Right ventricle myocardium superior (tissue), 1 donor: ENCODE measurements at regions of chr17 and their contacts with region 1.

Region 1: DNA sequence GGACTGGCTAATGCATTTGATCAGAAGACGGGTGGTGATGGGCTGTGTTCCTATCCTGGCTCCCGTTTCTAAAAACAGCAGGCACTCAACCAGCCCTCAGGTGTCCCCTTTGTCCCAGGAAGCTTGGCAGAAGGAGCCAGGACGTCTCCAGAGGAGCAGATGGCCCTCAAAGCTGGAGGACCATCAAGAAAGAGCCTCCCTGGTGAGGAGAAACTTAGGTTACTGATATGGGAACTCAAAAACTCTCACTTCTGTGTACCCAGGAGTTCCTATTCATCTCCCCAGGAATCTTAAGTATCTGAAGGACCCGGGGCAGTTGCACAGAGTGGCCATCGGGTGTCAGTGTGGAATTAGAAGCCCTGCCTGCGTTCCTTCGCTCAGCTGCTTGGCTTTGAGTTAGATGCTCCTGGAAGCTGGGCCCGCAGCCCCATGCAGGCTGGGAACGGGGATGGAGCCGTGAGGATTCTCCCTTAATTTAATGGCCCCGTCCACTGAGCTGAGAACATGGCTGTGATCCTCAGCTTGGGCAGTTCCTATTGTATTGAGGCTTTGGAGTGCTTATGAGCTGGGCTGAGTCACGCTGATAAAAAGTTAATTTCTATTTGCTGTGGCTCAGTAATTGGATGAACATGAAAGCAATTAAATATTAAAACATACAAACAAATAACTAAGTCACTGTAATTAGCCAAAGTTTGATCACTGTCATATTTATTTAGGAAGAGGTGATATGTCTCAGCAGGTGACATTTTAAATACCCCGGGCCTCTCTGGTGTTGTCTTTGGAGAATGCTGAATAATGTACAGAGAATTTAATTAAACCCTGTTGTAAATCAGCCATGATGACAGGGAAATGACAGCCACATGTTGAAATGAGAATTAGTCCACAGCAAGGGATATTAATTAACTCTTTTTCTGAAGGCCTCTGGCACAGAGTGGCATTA is 402.1 kb downstream of the SEC14L1 start:
- DNase-seq: peak; percentile 86
- ATAC-seq: peak; percentile 96

Region 2: DNA sequence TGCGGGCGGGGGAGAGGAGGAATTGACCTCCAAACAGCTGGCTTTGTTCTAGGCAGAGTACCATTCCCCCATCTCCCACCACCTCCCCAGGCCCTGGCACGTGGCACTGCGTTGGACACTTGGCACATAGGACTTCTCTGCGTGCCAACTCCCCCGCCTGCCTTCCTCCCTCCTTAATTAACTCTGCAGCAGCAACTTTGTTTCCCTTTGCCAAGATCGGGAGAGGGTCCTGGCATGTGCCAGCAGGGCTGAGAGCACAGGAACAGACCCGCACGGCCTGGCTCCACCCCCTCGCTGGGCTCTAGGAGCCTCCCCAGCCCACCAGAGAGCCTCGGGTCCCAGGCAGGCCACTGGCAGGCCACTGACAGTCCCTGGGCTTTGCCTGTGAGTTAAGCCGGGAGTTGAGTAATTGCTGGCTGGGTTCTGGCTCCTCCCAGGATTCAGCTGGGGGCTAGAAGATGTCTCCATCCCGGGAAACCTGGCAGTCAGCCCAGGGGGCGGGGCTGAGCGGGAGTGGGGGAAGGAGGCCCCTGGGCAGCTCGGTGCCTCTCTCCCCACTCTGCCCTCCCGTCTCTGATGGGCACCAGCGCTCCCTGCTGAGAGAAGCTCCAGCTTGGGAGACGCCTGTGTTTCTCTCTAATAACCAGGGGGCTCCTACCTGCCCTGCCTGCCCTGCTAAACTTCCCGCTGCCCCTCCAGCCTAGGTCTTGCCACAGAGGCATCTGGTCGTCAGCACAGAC is 191.7 kb after region 1 on chr17:
- intact Hi-C with region 1: loop called (anchors 10 kb)
- DNase-seq: peak; percentile 95
- ATAC-seq: peak; percentile 85

Region 3: GRCh38 chr17:77755410-77755963 is 212.7 kb after region 1 on chr17:
- intact Hi-C with region 1: no loop called
- DNase-seq: no peak
- ATAC-seq: no peak

Region 4: DNA sequence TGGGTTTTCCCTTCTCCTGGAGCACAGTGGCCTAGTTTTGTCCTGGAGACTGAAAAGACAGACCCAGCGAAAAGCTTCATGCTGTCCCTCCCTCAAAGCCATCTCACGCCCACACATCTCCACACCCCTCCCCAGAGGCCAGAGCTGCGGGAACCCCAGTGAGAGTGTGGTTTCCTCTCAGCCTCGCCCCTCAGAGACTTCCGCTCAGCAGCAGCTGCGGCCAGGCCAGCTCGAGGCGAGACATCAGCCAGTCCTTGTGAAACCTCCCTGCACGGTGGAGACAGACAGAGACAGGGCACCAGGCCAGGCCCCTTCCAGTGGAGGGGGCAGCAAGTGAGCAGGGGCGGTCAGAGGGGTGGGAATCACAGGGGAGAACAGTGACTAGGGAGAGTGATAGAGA is 338.7 kb after region 1 on chr17:
- intact Hi-C with region 1: loop called (anchors 10 kb)
- DNase-seq: peak; percentile 94
- ATAC-seq: peak; percentile 92